ENCODE measurements at regions of chr2 and their contacts with region 1.

Region 1: DNA sequence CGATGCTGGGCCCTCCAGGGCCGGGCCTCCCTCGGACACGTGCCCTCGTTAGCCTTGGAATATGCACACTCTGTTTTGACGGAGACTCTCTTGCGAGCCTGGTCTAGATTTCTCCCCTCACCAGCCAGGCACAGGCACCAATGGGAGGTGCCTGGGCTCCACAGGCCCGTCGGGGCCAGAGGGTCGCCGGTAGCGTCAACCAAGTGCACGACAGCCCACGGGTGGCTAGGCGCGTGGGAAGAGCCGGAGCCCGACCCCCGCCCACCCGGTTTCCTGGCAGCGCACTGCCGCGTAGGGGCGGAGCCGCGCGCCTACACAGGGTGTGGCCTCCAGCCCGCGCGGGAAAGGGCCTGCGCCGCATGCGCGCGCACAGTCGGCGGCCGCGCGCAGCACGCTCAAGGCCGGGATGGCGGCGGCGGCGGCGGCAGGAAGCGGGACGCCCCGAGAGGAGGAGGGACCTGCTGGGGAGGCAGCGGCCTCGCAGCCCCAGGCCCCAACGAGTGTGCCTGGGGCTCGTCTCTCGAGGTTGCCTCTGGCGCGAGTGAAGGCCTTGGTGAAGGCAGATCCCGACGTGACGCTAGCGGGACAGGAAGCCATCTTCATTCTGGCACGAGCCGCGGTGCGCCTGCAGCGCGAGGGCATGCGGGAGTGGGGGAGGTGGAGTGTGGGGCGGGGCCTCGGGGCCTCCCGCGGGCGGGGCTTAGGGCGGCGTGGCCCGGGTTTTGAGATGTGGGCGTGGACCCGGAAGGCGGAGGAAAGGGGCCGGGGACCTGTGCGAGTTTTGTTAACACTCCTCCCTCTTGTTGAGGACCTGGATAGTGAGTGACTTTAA is at the start of gene POLE4:
- DNase-seq: peak; percentile 97
- ATAC-seq: peak; percentile 92
- H3K4me3 Mint-ChIP-seq: peak within 1 kb of the TSS; percentile 68
- H3K27ac Mint-ChIP-seq: peak within 1 kb of the TSS; percentile 88
- H3K4me1 Mint-ChIP-seq: peaks cover 72% of the 10 kb centered on the region
- H3K27me3 Mint-ChIP-seq: no peaks in the 10 kb centered on the region
- total RNA-seq, gene POLE4: 29.3 to 44.0 TPM

Region 2: DNA sequence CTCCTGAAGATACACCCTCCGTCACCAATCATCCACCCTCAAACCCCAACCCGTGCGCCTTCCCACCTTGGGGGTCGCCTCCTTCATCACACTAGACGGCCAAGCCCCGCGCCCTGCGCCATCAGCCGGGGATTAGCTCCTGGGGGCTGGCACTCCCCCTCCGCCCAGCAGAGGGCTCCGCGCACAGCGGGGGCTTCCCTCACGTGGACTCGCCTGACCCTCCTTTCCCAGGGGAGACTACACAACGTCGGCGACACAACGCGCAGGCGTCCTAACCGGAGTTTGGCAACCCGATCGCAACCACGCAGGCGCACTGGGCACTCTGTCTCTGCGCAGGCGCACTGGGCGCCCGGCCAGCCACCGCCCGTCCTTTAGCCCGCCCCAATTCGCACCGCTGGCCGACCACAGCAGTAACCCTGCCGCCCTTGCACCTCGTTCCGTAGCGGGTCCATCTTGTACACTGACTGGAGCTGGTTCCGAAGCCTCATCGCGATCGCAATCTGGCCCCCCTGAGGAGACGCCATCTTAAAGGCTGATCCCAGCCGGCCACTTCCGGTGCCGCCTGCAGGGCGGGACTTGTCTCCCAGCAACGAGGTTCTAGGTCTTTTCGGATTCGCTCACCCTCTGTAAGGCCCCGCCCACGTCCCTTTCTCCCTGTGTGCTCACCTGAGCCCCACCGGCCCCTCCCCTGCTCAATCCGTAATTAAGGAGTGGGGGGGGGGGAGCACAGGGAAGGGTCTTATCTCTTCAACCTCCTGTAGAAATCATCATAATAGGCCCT is 451.2 kb before region 1 on chr2 and contains the start of gene PCGF1:
- CTCF ChIA-PET with region 1: no interaction called
- POLR2A ChIA-PET with region 1: no interaction called
- intact Hi-C with region 1: loop called in 1 of 2 experiments (anchors 1 kb)
- DNase-seq: peak; percentile 99
- ATAC-seq: peak; percentile 92
- H3K4me3 Mint-ChIP-seq: peak within 1 kb of the TSS; percentile 93
- H3K27ac Mint-ChIP-seq: peak within 1 kb of the TSS; percentile 99
- H3K4me1 Mint-ChIP-seq: peaks cover 40% of the 10 kb centered on the region
- H3K27me3 Mint-ChIP-seq: peaks cover 38% of the 10 kb centered on the region
- total RNA-seq, gene PCGF1: 21.7 to 28.7 TPM

Region 3: GRCh38 chr2:74653985-74654882 is 304.3 kb before region 1 on chr2 and contains the start of gene SEMA4F:
- CTCF ChIA-PET with region 1: no interaction called
- POLR2A ChIA-PET with region 1: no interaction called
- intact Hi-C with region 1: loop called in 1 of 2 experiments (anchors 1 kb)
- DNase-seq: peak; percentile 97
- ATAC-seq: peak; percentile 100
- H3K4me3 Mint-ChIP-seq: peak within 1 kb of the TSS; percentile 76
- H3K27ac Mint-ChIP-seq: peak within 1 kb of the TSS; percentile 49
- H3K4me1 Mint-ChIP-seq: peaks cover 13% of the 10 kb centered on the region
- H3K27me3 Mint-ChIP-seq: peaks cover 7% of the 10 kb centered on the region
- total RNA-seq, gene SEMA4F: 5.7 to 7.4 TPM

Region 4: GRCh38 chr2:74778381-74779264 is 179.9 kb before region 1 on chr2:
- CTCF ChIA-PET with region 1: no interaction called
- POLR2A ChIA-PET with region 1: no interaction called
- intact Hi-C with region 1: no loop called
- DNase-seq: peak; percentile 11
- ATAC-seq: no peak
- H3K4me3 Mint-ChIP-seq: no peak overlapping the region
- H3K27ac Mint-ChIP-seq: no peak overlapping the region
- H3K4me1 Mint-ChIP-seq: peaks cover 2% of the 10 kb centered on the region
- H3K27me3 Mint-ChIP-seq: no peaks in the 10 kb centered on the region

Region 5: GRCh38 chr2:75646583-75647425 is 688.3 kb after region 1 on chr2 and contains the start of gene MRPL19:
- CTCF ChIA-PET with region 1: no interaction called
- POLR2A ChIA-PET with region 1: no interaction called
- intact Hi-C with region 1: loop called in 1 of 2 experiments (anchors 1 kb)
- DNase-seq: peak; percentile 86
- ATAC-seq: peak; percentile 99
- H3K4me3 Mint-ChIP-seq: peak within 1 kb of the TSS; percentile 88
- H3K27ac Mint-ChIP-seq: peak within 1 kb of the TSS; percentile 96
- H3K4me1 Mint-ChIP-seq: peaks cover 32% of the 10 kb centered on the region
- H3K27me3 Mint-ChIP-seq: no peaks in the 10 kb centered on the region
- total RNA-seq, gene MRPL19: 45.2 to 72.4 TPM

Region 6: GRCh38 chr2:75710577-75711253 is 752.2 kb after region 1 on chr2 and contains the start of gene GCFC2:
- CTCF ChIA-PET with region 1: no interaction called
- POLR2A ChIA-PET with region 1: no interaction called
- intact Hi-C with region 1: loop called in 1 of 2 experiments (anchors 1 kb)
- DNase-seq: peak; percentile 90
- ATAC-seq: peak; percentile 95
- H3K4me3 Mint-ChIP-seq: peak within 1 kb of the TSS; percentile 73
- H3K27ac Mint-ChIP-seq: peak within 1 kb of the TSS; percentile 98
- H3K4me1 Mint-ChIP-seq: peaks cover 26% of the 10 kb centered on the region
- H3K27me3 Mint-ChIP-seq: peaks cover 2% of the 10 kb centered on the region
- total RNA-seq, gene GCFC2: 37.6 to 41.1 TPM

Region 7: GRCh38 chr2:75722687-75723086 is 764.2 kb after region 1 on chr2:
- CTCF ChIA-PET with region 1: no interaction called
- POLR2A ChIA-PET with region 1: no interaction called
- intact Hi-C with region 1: no loop called
- DNase-seq: no peak
- ATAC-seq: no peak
- H3K4me3 Mint-ChIP-seq: no peak overlapping the region
- H3K27ac Mint-ChIP-seq: no peak overlapping the region
- H3K4me1 Mint-ChIP-seq: no peaks in the 10 kb centered on the region
- H3K27me3 Mint-ChIP-seq: peaks cover 16% of the 10 kb centered on the region